HEK293T (cell line): ENCODE measurements at regions of chr2 and their contacts with region 1.

Region 1: DNA sequence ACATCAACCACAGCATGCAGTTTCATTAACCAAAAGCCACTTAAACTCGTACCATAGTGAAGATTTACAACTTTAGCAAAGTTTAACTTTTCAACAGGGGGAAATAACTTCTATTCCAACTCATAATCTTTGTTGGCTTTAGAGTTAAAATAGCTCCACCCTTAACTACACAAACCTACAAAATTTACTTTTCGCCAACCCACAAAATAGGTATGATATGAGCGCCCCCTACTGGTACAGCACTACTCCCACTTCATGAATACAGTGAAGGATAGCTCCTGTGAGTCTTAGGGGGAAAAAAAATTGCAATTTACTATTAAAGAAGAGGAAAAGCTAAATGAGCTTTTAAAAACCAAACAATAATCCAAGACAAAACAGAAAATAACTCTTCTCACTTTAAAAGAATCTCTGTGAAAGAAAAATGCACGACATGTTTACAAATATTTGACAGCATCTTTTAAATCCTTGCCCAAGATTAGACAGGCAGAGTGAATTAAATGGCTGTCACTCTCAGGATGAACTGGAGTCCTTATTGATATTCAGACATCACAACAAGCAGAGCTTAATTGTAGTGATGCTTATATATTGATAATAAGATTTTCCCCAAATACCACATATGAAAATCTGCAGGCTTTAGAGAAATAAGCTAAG is 32.2 kb downstream of the TMEFF2 start:
- DNase-seq: peak; percentile 38

Region 2: DNA sequence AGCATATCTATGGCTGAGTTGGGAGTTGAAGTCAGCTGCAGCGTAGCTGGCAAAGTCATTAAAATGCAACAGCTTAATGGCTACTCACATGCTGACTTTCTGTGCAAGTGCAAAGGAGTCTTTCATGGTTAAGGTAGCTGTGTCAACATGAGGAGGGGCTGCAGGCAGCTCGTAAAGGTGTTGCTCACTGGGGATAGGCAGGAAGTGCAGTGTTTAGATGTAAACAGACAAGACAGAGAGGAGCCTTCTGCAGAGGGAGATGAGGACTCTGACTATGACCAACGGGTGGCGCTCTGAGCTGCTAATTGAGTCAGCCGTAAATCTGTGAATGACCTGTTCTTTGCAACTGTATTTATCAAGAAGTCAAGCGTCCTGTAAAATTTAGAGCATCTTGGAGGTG is 293.3 kb before region 1 on chr2:
- CTCF ChIA-PET with region 1: interaction called, 16 read pairs
- POLR2A ChIA-PET with region 1: no interaction called
- DNase-seq: peak; percentile 23

Region 3: DNA sequence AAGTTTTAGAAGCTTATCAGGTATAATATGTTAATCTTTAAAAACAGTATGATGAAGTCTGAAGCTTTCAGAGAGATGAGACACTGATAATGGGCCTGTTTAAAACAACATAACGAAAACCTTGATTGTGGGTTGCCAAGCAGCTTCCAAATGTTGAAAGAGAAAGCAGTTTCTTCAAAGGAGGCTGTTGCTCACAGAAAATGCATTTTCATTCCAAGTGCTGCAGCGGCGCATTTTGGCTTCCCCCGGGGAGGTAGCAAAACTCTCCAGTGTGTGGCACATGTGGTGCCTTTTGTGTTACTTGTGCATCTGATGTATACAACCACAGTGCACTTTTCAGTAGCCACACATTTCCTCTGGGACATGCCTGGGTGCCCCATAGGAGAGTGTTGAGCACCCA is 33.9 kb before region 1 on chr2:
- CTCF ChIA-PET with region 1: no interaction called
- POLR2A ChIA-PET with region 1: no interaction called
- DNase-seq: no peak